ENCODE measurements at regions of chr14 and their contacts with region 1.

Region 1: GRCh38 chr14:66403183-66403582 is 83.0 kb upstream of the CCDC196 start:
- DNase-seq: no peak
- H3K4me3 ChIP-seq: no peak overlapping the region
- H3K27ac ChIP-seq: no peak overlapping the region
- H3K4me1 ChIP-seq: no peaks in the 10 kb centered on the region
- H3K27me3 ChIP-seq: no peaks in the 10 kb centered on the region
- CTCF ChIP-seq: peak in 1 of 3 donors; percentile 11
- EP300 ChIP-seq: no peak
- POLR2A ChIP-seq: no peak

Region 2: GRCh38 chr14:66009089-66009488 is 394.1 kb before region 1 on chr14:
- intact Hi-C with region 1: no loop called
- DNase-seq: no peak
- H3K4me3 ChIP-seq: no peak overlapping the region
- H3K27ac ChIP-seq: no peak overlapping the region
- H3K4me1 ChIP-seq: no peaks in the 10 kb centered on the region
- H3K27me3 ChIP-seq: no peaks in the 10 kb centered on the region
- CTCF ChIP-seq: no peak
- EP300 ChIP-seq: no peak
- POLR2A ChIP-seq: no peak

Region 3: DNA sequence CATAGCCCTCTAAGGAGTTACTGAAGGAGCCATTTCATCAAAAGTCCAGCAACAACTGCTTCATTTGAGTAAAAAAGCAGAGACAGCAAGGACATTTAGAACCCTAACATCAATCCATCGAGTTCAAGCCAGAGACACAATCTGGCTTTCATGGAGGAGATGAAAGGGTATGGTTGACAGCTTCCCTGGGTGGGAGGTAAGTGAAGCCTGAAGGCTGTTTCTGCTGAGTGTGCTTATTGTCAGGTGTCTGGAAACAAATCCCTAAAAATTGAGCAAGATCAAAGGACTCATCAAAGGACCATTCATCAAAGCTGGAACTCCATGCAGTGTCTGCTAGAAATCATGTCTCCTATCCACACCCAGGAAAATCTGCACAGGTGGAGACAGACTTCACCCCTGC is 21.4 kb before region 1 on chr14:
- intact Hi-C with region 1: loop called in 1 of 4 experiments (anchors 1 kb)
- DNase-seq: no peak
- H3K4me3 ChIP-seq: no peak overlapping the region
- H3K27ac ChIP-seq: no peak overlapping the region
- H3K4me1 ChIP-seq: peaks cover 4% of the 10 kb centered on the region
- H3K27me3 ChIP-seq: no peaks in the 10 kb centered on the region
- CTCF ChIP-seq: no peak
- EP300 ChIP-seq: no peak
- POLR2A ChIP-seq: no peak